Heart right ventricle (tissue), 16 donors: ENCODE measurements at regions of chr12 and their contacts with region 1.

Region 1: DNA sequence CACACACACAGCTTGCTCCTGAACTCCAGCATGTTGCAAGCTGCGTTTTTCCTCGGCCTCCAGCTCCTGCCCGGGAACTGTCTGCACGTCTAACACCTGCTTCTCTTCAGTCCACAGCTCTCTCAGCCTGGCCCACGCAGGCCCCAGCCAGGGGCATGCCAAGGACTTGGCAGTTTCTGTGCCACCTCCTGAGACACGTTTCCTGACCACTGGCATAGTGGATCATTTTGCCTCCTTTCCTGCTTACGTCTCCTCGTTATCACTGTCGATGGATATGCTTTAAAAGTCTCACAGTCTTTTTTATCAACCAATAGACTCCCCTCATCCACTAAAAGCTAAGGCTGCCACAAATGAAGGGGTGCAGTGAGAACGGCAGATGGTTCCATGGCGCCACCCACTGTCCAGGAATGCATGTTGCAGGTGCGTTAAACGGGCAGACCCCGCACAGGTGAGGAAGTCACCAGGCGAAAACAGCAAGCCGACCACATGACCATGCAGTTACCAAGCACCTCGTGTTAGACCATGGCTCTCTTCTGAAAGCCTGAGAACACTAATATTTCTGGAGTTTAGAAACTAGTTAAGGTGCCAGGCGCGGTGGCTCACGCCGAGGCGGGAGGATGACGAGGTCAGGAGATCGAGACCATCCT is 14.7 kb upstream of the TEAD4 start:
- DNase-seq: peak; percentile 27 to 38
- ATAC-seq: peak; percentile 47 to 91 (median 70)
- H3K4me3 ChIP-seq: no peak overlapping the region
- H3K27ac ChIP-seq: no peak overlapping the region
- H3K4me1 ChIP-seq: peaks cover 0 to 10% (median 6%) of the 10 kb centered on the region in 9 donors
- H3K27me3 ChIP-seq: no peaks in the 10 kb centered on the region
- CTCF ChIP-seq: peak; percentile 47 to 78 (median 68)

Region 2: DNA sequence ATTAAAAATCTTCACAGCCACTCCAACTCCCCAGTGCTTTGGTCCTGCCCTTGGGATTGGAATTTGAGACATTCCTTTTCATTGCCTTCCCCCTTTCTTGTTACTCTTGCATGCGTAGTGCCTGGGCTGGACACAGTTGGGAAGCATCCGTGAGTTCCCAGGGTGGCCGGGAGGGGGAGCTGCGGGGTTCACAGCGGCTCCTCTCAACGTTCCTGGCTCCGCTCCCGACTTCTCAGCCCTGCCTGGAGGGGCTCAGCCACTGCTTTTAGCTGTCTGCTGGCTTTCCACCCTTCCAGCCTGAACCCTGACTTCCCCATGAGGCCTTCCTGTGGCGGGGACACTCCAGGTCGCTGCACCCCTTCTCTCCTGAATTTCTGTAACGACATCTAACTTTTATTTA is 90.9 kb before region 1 on chr12:
- intact Hi-C with region 1: loop called in 1 of 10 experiments (anchors 10 kb)
- DNase-seq: peak; percentile 85
- ATAC-seq: peak; percentile 77 to 94 (median 90)
- H3K4me3 ChIP-seq: no peak overlapping the region
- H3K27ac ChIP-seq: no peak overlapping the region
- H3K4me1 ChIP-seq: peaks cover 0 to 5% (median 0%) of the 10 kb centered on the region in 9 donors
- H3K27me3 ChIP-seq: no peaks in the 10 kb centered on the region
- CTCF ChIP-seq: peak; percentile 77 to 89 (median 87)

Region 3: GRCh38 chr12:2877047-2877952 is 67.2 kb before region 1 on chr12 and contains the starts of genes FOXM1 and RHNO1:
- intact Hi-C with region 1: loop called in 4 of 10 experiments (anchors 10 kb)
- DNase-seq: peak; percentile 90 to 91
- ATAC-seq: peak; percentile 94 to 97 (median 96)
- H3K4me3 ChIP-seq: peak within 1 kb of the TSS; percentile 59 to 99 (median 92)
- H3K27ac ChIP-seq: peak within 1 kb of the TSS in 9 of 10 donors; percentile 61 to 99 (median 88)
- H3K4me1 ChIP-seq: peaks cover 10 to 26% (median 18%) of the 10 kb centered on the region in 9 donors
- H3K27me3 ChIP-seq: no peaks in the 10 kb centered on the region
- CTCF ChIP-seq: peak in 5 of 9 donors; percentile 7 to 50 (median 35)
- total RNA-seq, gene FOXM1: 0.19 to 10.9 (median 0.89) TPM in 9 of 10 donors, not detected in the other
- total RNA-seq, gene RHNO1: 3.7 to 10.9 (median 7.1) TPM

Region 4: DNA sequence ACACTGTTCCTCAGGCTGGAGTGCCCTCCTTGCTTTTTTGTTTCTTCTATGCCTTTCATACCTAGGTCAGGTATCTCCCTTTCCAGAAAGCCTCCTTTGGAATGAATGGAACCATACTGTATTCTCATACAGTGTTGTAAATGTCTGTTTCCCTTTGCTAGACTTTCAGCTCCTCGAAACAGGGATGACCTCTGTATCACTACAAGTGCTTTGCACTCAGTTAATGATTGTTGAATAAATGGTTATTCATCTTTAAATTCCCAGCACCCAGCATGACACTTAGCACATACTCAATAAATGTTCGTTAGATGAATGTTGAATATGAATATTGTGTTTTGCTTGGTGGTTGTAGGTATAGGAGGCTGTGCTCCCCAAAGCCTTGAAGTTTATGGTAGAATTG is 59.7 kb before region 1 on chr12:
- intact Hi-C with region 1: loop called in 7 of 10 experiments (anchors 1 to 10 kb)
- DNase-seq: no peak
- ATAC-seq: no peak
- H3K4me3 ChIP-seq: no peak overlapping the region
- H3K27ac ChIP-seq: no peak overlapping the region
- H3K4me1 ChIP-seq: peaks cover 0 to under 1% (median 0%) of the 10 kb centered on the region in 9 donors
- H3K27me3 ChIP-seq: no peaks in the 10 kb centered on the region
- CTCF ChIP-seq: no peak

Region 5: GRCh38 chr12:2890388-2891239 is 53.9 kb before region 1 on chr12 and contains the start of gene TULP3:
- intact Hi-C with region 1: loop called in 7 of 10 experiments (anchors 1 to 10 kb)
- DNase-seq: peak; percentile 99
- ATAC-seq: peak; percentile 99
- H3K4me3 ChIP-seq: peak within 1 kb of the TSS; percentile 84 to 100 (median 95)
- H3K27ac ChIP-seq: peak within 1 kb of the TSS; percentile 83 to 96 (median 92)
- H3K4me1 ChIP-seq: peaks cover 0 to 30% (median 17%) of the 10 kb centered on the region in 9 donors
- H3K27me3 ChIP-seq: no peaks in the 10 kb centered on the region
- CTCF ChIP-seq: peak in 5 of 9 donors; percentile 6 to 39 (median 28)
- total RNA-seq, gene TULP3: 4.0 to 7.3 (median 4.6) TPM